ENCODE measurements at regions of chr2 and their contacts with region 1.

Region 1: GRCh38 chr2:200963124-200963917 is at the start of gene ORC2:
- DNase-seq: peak; percentile 87 to 94 (median 87)
- H3K4me3 ChIP-seq: peak within 1 kb of the TSS; percentile 85 to 94 (median 91)
- H3K4me3 Mint-ChIP-seq: peak within 1 kb of the TSS; percentile 93 to 95
- H3K27ac ChIP-seq: peak within 1 kb of the TSS; percentile 59 to 92
- H3K27ac Mint-ChIP-seq: peak within 1 kb of the TSS; percentile 93 to 98 (median 97)
- H3K4me1 ChIP-seq: peaks cover 25 to 37% of the 10 kb centered on the region in 2 donors
- H3K4me1 Mint-ChIP-seq: peaks cover 35% of the 10 kb centered on the region
- H3K27me3 ChIP-seq: no peaks in the 10 kb centered on the region
- H3K27me3 Mint-ChIP-seq: no peaks in the 10 kb centered on the region
- CTCF ChIP-seq: peak; percentile 88
- polyA plus RNA-seq, gene ORC2: 3.1 to 5.4 (median 3.9) TPM

Region 2: GRCh38 chr2:200929334-200930249 is 33.7 kb before region 1 on chr2:
- intact Hi-C with region 1: no loop called
- DNase-seq: no peak
- H3K4me3 ChIP-seq: no peak overlapping the region
- H3K4me3 Mint-ChIP-seq: no peak overlapping the region
- H3K27ac ChIP-seq: peak overlapping the region in 1 of 2 donors; percentile 78
- H3K27ac Mint-ChIP-seq: peak overlapping the region in 5 of 7 donors; percentile 23 to 81 (median 66)
- H3K4me1 ChIP-seq: peaks cover 8 to 22% of the 10 kb centered on the region in 2 donors
- H3K4me1 Mint-ChIP-seq: peaks cover 16% of the 10 kb centered on the region
- H3K27me3 ChIP-seq: no peaks in the 10 kb centered on the region
- H3K27me3 Mint-ChIP-seq: no peaks in the 10 kb centered on the region
- CTCF ChIP-seq: no peak

Region 3: DNA sequence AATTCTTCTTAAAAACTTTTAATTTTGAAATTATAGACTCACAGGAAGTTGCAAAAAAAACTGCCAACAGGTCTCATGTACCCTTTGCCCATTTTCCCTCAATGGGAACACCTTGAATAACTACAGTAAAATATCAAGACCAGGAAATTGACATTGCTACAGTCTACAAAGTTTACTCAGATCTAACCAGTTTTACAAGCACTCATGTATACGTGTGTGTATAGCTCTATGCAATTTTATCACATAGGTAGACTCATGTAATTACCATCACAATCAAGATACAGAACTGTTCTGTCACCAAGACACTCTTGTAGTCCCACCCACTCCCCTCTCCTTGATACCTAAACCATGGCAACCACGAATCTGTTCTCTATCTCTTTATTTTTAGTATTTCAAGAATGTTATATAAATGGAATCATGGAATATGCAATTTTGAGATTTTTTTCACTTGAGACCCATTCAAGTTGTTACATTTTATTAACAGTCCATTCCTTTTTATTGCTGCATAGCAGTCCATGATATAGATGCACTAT is 101.5 kb after region 1 on chr2:
- intact Hi-C with region 1: loop called (anchors 5 kb)
- DNase-seq: no peak
- H3K4me3 ChIP-seq: no peak overlapping the region
- H3K4me3 Mint-ChIP-seq: no peak overlapping the region
- H3K27ac ChIP-seq: no peak overlapping the region
- H3K27ac Mint-ChIP-seq: peak overlapping the region in 1 of 7 donors; percentile 20
- H3K4me1 ChIP-seq: peaks cover 9 to 28% of the 10 kb centered on the region in 2 donors
- H3K4me1 Mint-ChIP-seq: peaks cover 40% of the 10 kb centered on the region
- H3K27me3 ChIP-seq: no peaks in the 10 kb centered on the region
- H3K27me3 Mint-ChIP-seq: peaks cover 0 to 3% (median 2%) of the 10 kb centered on the region in 3 donors
- CTCF ChIP-seq: no peak

Region 4: DNA sequence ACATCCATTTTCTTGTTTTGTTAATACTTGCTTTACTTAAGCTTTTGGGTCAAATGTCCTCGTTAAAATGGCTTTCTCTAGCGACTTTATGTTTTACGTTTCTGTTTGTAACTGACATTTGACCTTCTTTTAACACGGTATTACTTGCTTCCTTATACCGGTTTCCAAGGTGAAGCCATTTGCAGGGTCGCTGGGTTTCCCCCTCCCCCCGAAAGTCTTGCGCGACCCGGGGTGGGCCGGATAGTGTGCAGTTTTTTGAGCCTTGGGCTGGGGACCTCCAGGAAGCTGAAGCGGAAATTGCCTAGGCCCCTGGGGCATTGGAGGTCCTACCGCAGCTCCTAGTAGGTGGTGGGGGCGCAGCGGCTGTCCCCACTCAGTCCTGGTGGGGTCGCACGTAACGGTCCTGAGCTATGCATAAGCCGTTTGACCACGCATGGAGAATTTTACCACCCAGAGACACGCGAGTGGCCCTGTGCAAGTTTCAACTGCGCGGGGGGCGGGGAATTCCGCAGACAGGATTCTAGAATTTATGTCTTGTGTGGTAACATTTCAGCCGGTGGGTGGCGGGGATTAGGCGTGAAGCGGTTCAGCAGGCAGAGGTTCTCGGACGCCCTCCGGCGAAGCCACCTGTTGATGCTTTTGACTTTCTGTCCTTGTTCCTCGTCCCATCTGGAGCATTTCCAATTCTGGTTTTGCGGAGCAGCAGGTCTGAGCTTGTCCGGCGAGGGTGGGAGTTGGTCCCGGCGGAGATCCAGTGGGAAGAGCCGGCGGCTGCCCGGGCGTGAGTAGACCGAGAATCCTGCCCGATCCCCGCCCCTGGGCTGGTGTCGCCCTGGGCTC is 155.0 kb after region 1 on chr2:
- intact Hi-C with region 1: loop called in 1 of 2 experiments (anchors 5 kb)
- DNase-seq: peak; percentile 67 to 88 (median 68)
- H3K4me3 ChIP-seq: peak overlapping the region; percentile 77 to 99 (median 83)
- H3K4me3 Mint-ChIP-seq: peak overlapping the region; percentile 97 to 99
- H3K27ac ChIP-seq: peak overlapping the region; percentile 96 to 99
- H3K27ac Mint-ChIP-seq: peak overlapping the region; percentile 93 to 99 (median 99)
- H3K4me1 ChIP-seq: peaks cover 40 to 63% of the 10 kb centered on the region in 2 donors
- H3K4me1 Mint-ChIP-seq: peaks cover 43% of the 10 kb centered on the region
- H3K27me3 ChIP-seq: no peaks in the 10 kb centered on the region
- H3K27me3 Mint-ChIP-seq: peaks cover 0 to 4% (median 1%) of the 10 kb centered on the region in 3 donors
- CTCF ChIP-seq: peak; percentile 35

Region 5: GRCh38 chr2:201171259-201171814 is 208.0 kb after region 1 on chr2:
- intact Hi-C with region 1: loop called in 1 of 2 experiments (anchors 10 kb)
- DNase-seq: no peak
- H3K4me3 ChIP-seq: no peak overlapping the region
- H3K4me3 Mint-ChIP-seq: no peak overlapping the region
- H3K27ac ChIP-seq: no peak overlapping the region
- H3K27ac Mint-ChIP-seq: peak overlapping the region in 2 of 7 donors; percentile 49 to 65
- H3K4me1 ChIP-seq: peaks cover 3 to 15% of the 10 kb centered on the region in 2 donors
- H3K4me1 Mint-ChIP-seq: peaks cover 31% of the 10 kb centered on the region
- H3K27me3 ChIP-seq: no peaks in the 10 kb centered on the region
- H3K27me3 Mint-ChIP-seq: peaks cover 0 to 3% (median 0%) of the 10 kb centered on the region in 3 donors
- CTCF ChIP-seq: no peak

Region 6: GRCh38 chr2:201182650-201183364 is 219.5 kb after region 1 on chr2 and contains the start of gene CASP10:
- intact Hi-C with region 1: loop called (anchors 10 kb)
- DNase-seq: peak; percentile 48 to 74 (median 74)
- H3K4me3 ChIP-seq: peak within 1 kb of the TSS; percentile 76 to 99 (median 88)
- H3K4me3 Mint-ChIP-seq: peak within 1 kb of the TSS; percentile 84 to 95
- H3K27ac ChIP-seq: peak within 1 kb of the TSS in 1 of 2 donors; percentile 80
- H3K27ac Mint-ChIP-seq: peak within 1 kb of the TSS; percentile 84 to 93 (median 92)
- H3K4me1 ChIP-seq: peaks cover 28 to 58% of the 10 kb centered on the region in 2 donors
- H3K4me1 Mint-ChIP-seq: peaks cover 52% of the 10 kb centered on the region
- H3K27me3 ChIP-seq: no peaks in the 10 kb centered on the region
- H3K27me3 Mint-ChIP-seq: peaks cover 0 to 2% (median 0%) of the 10 kb centered on the region in 3 donors
- CTCF ChIP-seq: peak; percentile 46
- polyA plus RNA-seq, gene CASP10: 17.7 to 23.3 (median 18.9) TPM